HepG2 (cell line): ENCODE measurements at regions of chr4 and their contacts with region 1.

Region 1: GRCh38 chr4:98092833-98093439 is 50.3 kb downstream of the STPG2 start:
- DNase-seq: peak; percentile 9
- ATAC-seq: no peak
- H3K4me3 ChIP-seq: no peak overlapping the region
- H3K27ac ChIP-seq: no peak overlapping the region
- H3K4me1 ChIP-seq: no peaks in the 10 kb centered on the region
- H3K27me3 ChIP-seq: no peaks in the 10 kb centered on the region
- CTCF ChIP-seq: peak; percentile 36; the same call in 1 of the 2 replicates
- EP300 ChIP-seq: no peak
- POLR2A ChIP-seq: no peak
- RAD21 ChIP-seq: no peak

Region 2: GRCh38 chr4:97548943-97549583 is 543.9 kb before region 1 on chr4:
- CTCF ChIA-PET with region 1: no interaction called
- POLR2A ChIA-PET with region 1: no interaction called
- in situ Hi-C with region 1: no loop called
- intact Hi-C with region 1: loop called (anchors 5 kb)
- DNase-seq: no peak
- ATAC-seq: no peak
- H3K4me3 ChIP-seq: no peak overlapping the region
- H3K27ac ChIP-seq: no peak overlapping the region
- H3K4me1 ChIP-seq: no peaks in the 10 kb centered on the region
- H3K27me3 ChIP-seq: no peaks in the 10 kb centered on the region
- CTCF ChIP-seq: no peak
- EP300 ChIP-seq: no peak
- POLR2A ChIP-seq: no peak
- RAD21 ChIP-seq: no peak

Region 3: GRCh38 chr4:99563310-99564186 is 1470.6 kb after region 1 on chr4 and contains the start of gene TRMT10A:
- CTCF ChIA-PET with region 1: no interaction called
- POLR2A ChIA-PET with region 1: no interaction called
- in situ Hi-C with region 1: no loop called
- intact Hi-C with region 1: no loop called
- DNase-seq: peak; percentile 96
- ATAC-seq: peak; percentile 96
- H3K4me3 ChIP-seq: peak within 1 kb of the TSS; percentile 81 to 85 (median 84)
- H3K27ac ChIP-seq: peak within 1 kb of the TSS; percentile 92
- H3K4me1 ChIP-seq: peaks cover 7% of the 10 kb centered on the region; the same call in 1 of the 2 replicates
- H3K27me3 ChIP-seq: no peaks in the 10 kb centered on the region
- CTCF ChIP-seq: no peak
- EP300 ChIP-seq: no peak; a peak in 1 of 4 replicates
- POLR2A ChIP-seq: peak; percentile 77 to 87
- RAD21 ChIP-seq: no peak
- total RNA-seq, gene TRMT10A: 12.6 and 18.8 TPM in 2 replicates